Right ventricle myocardium inferior (tissue), 1 donor: ENCODE measurements at regions of chr22 and their contacts with region 1.

Region 1: DNA sequence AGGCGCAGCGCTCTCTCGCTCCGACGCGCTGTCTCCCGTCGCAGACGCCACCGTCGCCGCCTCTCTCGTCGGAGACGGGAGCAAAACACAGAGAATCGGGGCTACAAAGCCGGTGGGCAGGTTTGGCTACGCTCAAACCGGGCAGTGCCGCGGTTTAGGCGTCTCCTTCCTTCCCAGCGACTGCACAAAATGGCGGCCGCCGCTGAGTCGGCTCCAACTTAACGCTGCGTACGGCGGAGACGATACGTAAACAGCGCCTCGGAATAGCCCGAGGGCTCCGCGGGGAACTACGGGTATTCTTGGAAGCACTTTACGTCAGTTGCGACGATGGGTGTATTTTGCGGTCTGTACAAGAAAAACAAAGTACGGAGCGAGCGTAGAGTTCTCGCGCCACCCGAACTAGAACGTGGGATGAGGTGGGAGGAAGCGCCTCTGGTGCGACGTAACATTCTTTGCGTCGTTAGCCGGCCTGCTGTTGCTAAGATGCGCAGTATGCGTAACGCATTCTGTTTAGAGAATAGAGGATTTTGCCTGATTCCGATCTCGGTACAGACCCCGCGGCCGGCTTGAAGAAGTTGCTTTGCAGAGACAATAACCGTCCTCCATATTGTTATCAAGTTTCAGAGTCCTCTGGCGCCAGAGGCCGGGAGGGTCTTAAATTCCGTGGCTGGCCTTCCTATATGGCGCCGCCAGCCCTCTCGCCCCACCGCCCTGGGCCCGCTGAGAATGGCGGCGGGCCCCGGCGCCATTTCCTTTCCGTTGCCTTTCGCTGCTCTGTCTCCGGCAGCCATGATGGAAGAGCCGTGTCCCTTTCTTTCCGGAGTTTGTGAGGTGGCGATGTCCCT is at the start of gene DDX17:
- DNase-seq: peak; percentile 96
- ATAC-seq: peak; percentile 89
- total RNA-seq, gene DDX17: 195 TPM

Region 2: GRCh38 chr22:38056969-38057891 is 449.1 kb before region 1 on chr22 and contains the start of gene PICK1:
- intact Hi-C with region 1: loop called (anchors 5 kb)
- DNase-seq: peak; percentile 89
- ATAC-seq: peak; percentile 90
- total RNA-seq, gene PICK1: 20.9 TPM

Region 3: GRCh38 chr22:38398609-38399461 is 107.5 kb before region 1 on chr22:
- intact Hi-C with region 1: loop called (anchors 2 kb)
- DNase-seq: peak; percentile 93
- ATAC-seq: peak; percentile 93

Region 4: DNA sequence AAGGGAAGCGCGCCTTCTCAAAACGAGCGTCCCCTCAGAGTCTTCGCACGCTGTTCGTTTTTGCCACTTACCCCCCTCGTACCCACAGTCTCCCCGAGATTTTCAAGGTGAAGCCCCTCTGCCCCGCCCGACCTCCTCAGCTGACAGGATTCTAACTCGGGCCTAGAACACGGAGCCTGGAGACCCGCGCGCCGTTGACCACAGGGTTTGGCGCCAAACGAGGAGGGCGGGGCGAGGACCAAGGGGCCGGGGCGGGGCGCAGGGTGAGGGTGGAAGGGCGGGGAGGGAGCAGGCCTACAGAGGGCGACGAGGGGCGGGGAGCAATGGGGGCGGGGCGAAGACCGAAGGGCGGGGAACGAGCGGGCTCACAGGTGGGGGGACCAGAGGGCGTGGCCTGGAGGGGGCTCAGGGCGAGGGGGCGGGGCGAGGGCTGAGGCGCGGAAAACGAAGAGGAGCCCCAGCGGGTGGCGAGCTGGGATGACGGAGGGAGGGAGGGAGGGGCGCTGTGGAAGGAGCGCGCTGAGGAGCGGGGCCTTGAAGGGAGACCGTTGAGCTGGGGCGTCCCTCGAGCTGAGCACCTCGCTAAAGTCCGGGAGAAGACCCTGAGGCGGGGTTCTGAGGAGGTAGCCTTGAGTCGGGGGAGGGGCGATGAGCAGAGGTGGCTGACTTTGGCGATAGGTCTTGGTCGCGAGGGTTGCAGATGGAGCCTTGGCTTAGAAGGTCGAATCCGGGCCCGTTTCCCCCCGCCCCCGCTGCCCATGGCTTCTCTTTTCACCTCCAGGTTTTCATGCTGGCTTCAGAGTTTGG is 63.8 kb after region 1 on chr22 and contains the start of gene DMC1:
- intact Hi-C with region 1: loop called (anchors 1 kb)
- DNase-seq: peak; percentile 91
- ATAC-seq: peak; percentile 98
- total RNA-seq, gene DMC1: 0.46 TPM

Region 5: GRCh38 chr22:38766076-38766777 is 259.9 kb after region 1 on chr22:
- intact Hi-C with region 1: no loop called
- DNase-seq: peak; percentile 65
- ATAC-seq: peak; percentile 45